ENCODE measurements at regions of chr6 and their contacts with region 1.

Region 1: GRCh38 chr6:37207903-37208456 is 38.0 kb downstream of the PIM1 start:
- DNase-seq: peak; percentile 97
- ATAC-seq: peak; percentile 76
- H3K4me3 Mint-ChIP-seq: no peak overlapping the region
- H3K27ac Mint-ChIP-seq: peak overlapping the region; percentile 86
- H3K4me1 Mint-ChIP-seq: peaks cover 65% of the 10 kb centered on the region
- H3K27me3 Mint-ChIP-seq: no peaks in the 10 kb centered on the region
- CTCF ChIP-seq: peak; percentile 93

Region 2: GRCh38 chr6:36874443-36875249 is 333.3 kb before region 1 on chr6 and contains the start of gene PPIL1:
- CTCF ChIA-PET with region 1: interaction called, 13 read pairs
- POLR2A ChIA-PET with region 1: no interaction called
- intact Hi-C with region 1: no loop called
- DNase-seq: peak; percentile 88
- ATAC-seq: peak; percentile 91
- H3K4me3 Mint-ChIP-seq: peak within 1 kb of the TSS; percentile 99
- H3K27ac Mint-ChIP-seq: peak within 1 kb of the TSS; percentile 100
- H3K4me1 Mint-ChIP-seq: peaks cover 42% of the 10 kb centered on the region
- H3K27me3 Mint-ChIP-seq: peaks cover 5% of the 10 kb centered on the region
- CTCF ChIP-seq: no peak
- total RNA-seq, gene PPIL1: 34.5 to 35.6 TPM

Region 3: DNA sequence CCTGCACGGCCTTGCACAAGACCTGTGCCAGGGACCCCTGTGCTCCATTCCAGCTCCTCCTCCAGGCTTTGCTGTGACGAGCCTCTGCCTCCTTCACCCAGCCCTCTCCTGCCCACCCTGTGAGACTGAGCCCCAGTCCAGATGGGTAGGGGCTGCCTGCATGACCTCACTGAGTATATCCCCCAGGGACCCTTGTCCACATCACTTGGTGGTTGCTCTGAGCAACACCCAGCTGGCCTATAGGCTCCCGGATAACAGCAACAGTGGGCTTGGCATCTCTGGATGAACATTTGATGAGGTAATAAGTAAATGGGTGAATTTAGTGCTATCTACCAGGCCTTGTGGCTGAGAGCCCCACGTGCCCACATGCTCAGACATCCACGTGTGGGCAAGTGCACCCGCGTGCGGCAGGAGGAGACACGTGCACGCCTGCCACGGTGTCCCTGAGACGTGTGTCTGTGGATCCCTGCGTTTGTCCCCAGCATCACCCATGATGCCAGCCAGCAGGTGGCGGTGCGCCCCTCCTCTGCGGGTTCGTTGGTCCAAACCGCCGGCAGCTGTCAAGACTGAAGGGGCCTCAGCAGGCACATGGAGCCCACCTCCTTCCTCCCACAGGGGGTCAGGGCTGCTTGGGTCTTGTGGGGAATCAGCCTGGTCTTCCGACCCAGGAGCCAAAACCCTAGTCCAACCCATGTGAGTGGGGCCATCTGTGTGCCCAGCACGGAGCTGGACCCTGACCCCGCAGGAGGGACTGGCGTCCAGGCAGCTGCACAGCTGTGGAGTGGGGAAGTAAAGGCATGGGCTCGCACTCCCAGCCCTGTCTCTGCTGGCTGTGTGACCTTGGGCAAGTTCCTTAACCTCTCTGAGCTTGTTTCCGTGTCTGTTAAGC is 156.6 kb before region 1 on chr6:
- CTCF ChIA-PET with region 1: interaction called, 97 read pairs
- POLR2A ChIA-PET with region 1: interaction called, 32 read pairs
- intact Hi-C with region 1: loop called (anchors 2 kb)
- DNase-seq: peak; percentile 95
- ATAC-seq: peak; percentile 47
- H3K4me3 Mint-ChIP-seq: peak overlapping the region; percentile 83
- H3K27ac Mint-ChIP-seq: peak overlapping the region; percentile 99
- H3K4me1 Mint-ChIP-seq: peaks cover 56% of the 10 kb centered on the region
- H3K27me3 Mint-ChIP-seq: no peaks in the 10 kb centered on the region
- CTCF ChIP-seq: peak; percentile 84

Region 4: DNA sequence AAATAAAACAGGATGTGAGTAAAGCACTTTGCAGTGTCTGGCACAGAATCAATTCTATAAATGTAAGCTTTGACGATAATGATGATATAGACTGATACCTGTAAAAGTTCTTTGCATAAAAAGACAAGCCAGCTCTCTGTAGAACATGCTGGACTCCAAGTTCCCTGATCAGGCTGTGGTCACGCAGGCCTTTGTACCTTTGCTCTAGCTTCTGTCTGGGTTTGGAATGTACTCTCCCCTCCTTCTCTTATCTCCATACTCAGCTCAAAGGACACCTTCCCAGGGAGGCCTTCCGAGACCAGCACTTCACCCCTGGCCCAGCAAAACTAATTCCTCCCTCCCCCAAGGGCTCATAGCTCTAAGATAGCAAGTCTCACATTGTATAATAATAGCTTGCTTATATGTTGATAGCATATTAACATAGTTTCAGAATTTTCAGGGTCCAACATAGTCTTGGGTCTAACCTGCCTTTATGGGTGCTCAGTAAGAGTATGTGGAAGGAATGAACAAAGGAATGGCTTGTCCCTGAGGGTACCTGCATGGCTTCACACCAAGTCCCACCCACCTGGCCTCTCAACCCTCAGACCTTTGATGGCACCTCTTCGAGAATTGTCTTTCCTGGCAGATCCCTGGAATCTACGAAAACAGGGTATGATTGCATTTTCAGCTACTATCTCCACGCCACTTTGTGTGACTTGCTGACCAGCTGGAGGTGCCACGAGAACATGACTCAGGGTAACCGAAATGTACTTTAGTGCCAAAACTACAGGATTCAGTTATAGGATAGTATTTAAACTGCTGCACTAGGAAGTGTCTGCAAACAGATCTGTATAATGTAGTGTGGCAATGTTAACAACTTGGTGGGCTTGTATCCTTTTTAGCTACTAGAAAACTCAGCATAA is 79.8 kb before region 1 on chr6:
- CTCF ChIA-PET with region 1: no interaction called
- POLR2A ChIA-PET with region 1: no interaction called
- intact Hi-C with region 1: no loop called
- DNase-seq: no peak
- ATAC-seq: no peak
- H3K4me3 Mint-ChIP-seq: no peak overlapping the region
- H3K27ac Mint-ChIP-seq: no peak overlapping the region
- H3K4me1 Mint-ChIP-seq: no peaks in the 10 kb centered on the region
- H3K27me3 Mint-ChIP-seq: no peaks in the 10 kb centered on the region
- CTCF ChIP-seq: no peak

Region 5: GRCh38 chr6:37169496-37170272 is 38.3 kb before region 1 on chr6 and contains the start of gene PIM1:
- CTCF ChIA-PET with region 1: interaction called, 278 read pairs
- POLR2A ChIA-PET with region 1: interaction called, 222 read pairs
- intact Hi-C with region 1: loop called (anchors 2 kb)
- DNase-seq: peak; percentile 100
- ATAC-seq: peak; percentile 80
- H3K4me3 Mint-ChIP-seq: peak within 1 kb of the TSS; percentile 93
- H3K27ac Mint-ChIP-seq: peak within 1 kb of the TSS; percentile 98
- H3K4me1 Mint-ChIP-seq: peaks cover 37% of the 10 kb centered on the region
- H3K27me3 Mint-ChIP-seq: no peaks in the 10 kb centered on the region
- CTCF ChIP-seq: no peak
- total RNA-seq, gene PIM1: 293 to 305 TPM

Region 6: GRCh38 chr6:37190159-37190535 is 17.8 kb before region 1 on chr6:
- CTCF ChIA-PET with region 1: interaction called, 57 read pairs
- POLR2A ChIA-PET with region 1: interaction called, 7 read pairs
- intact Hi-C with region 1: no loop called
- DNase-seq: peak; percentile 52
- ATAC-seq: peak; percentile 63
- H3K4me3 Mint-ChIP-seq: no peak overlapping the region
- H3K27ac Mint-ChIP-seq: peak overlapping the region; percentile 77
- H3K4me1 Mint-ChIP-seq: peaks cover 72% of the 10 kb centered on the region
- H3K27me3 Mint-ChIP-seq: no peaks in the 10 kb centered on the region
- CTCF ChIP-seq: no peak

Region 7: DNA sequence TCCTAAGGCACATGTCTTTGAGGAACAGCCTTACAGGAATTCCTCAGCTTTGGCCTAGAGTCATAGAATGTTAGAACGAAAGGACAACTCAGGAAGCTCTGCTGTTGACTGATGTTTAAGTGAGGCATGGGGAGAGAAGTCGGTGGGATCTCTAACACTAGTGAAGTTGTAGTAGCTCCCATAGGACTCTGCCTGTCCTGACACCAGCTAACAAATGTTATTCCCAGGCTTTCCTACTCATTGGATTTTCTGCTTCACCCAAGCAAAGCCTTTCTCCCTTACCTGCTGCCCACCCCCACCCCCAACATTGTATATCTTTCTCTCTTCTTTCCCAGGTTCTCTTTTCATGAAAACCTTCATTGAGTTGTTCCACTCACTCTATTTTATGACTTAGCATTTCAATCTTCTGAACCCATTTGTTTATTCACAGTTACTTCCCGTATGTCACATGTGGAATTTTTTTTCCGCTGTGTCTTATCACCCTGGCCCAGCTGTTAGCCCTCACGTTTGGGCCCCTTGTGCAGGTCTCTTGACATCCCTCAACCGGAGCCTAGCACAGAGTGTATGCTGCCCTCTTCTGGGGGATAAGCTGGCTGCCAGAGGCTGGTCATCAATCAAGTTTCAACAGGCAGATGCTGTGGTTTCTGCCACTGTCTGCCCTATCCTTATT is 106.6 kb after region 1 on chr6:
- CTCF ChIA-PET with region 1: interaction called, 33 read pairs
- POLR2A ChIA-PET with region 1: interaction called, 3 read pairs
- intact Hi-C with region 1: no loop called
- DNase-seq: peak; percentile 70
- ATAC-seq: peak; percentile 80
- H3K4me3 Mint-ChIP-seq: no peak overlapping the region
- H3K27ac Mint-ChIP-seq: peak overlapping the region; percentile 76
- H3K4me1 Mint-ChIP-seq: peaks cover 3% of the 10 kb centered on the region
- H3K27me3 Mint-ChIP-seq: no peaks in the 10 kb centered on the region
- CTCF ChIP-seq: peak; percentile 71

Region 8: GRCh38 chr6:37353761-37354525 is 146.0 kb after region 1 on chr6 and contains the start of gene RNF8:
- CTCF ChIA-PET with region 1: no interaction called
- POLR2A ChIA-PET with region 1: no interaction called
- intact Hi-C with region 1: no loop called
- DNase-seq: peak; percentile 96
- ATAC-seq: peak; percentile 99
- H3K4me3 Mint-ChIP-seq: peak within 1 kb of the TSS; percentile 90
- H3K27ac Mint-ChIP-seq: peak within 1 kb of the TSS; percentile 89
- H3K4me1 Mint-ChIP-seq: peaks cover 26% of the 10 kb centered on the region
- H3K27me3 Mint-ChIP-seq: no peaks in the 10 kb centered on the region
- CTCF ChIP-seq: no peak
- total RNA-seq, gene RNF8: 19.8 to 21.1 TPM